HepG2 (cell line): ENCODE measurements at regions of chr4 and their contacts with region 1.

Region 1: DNA sequence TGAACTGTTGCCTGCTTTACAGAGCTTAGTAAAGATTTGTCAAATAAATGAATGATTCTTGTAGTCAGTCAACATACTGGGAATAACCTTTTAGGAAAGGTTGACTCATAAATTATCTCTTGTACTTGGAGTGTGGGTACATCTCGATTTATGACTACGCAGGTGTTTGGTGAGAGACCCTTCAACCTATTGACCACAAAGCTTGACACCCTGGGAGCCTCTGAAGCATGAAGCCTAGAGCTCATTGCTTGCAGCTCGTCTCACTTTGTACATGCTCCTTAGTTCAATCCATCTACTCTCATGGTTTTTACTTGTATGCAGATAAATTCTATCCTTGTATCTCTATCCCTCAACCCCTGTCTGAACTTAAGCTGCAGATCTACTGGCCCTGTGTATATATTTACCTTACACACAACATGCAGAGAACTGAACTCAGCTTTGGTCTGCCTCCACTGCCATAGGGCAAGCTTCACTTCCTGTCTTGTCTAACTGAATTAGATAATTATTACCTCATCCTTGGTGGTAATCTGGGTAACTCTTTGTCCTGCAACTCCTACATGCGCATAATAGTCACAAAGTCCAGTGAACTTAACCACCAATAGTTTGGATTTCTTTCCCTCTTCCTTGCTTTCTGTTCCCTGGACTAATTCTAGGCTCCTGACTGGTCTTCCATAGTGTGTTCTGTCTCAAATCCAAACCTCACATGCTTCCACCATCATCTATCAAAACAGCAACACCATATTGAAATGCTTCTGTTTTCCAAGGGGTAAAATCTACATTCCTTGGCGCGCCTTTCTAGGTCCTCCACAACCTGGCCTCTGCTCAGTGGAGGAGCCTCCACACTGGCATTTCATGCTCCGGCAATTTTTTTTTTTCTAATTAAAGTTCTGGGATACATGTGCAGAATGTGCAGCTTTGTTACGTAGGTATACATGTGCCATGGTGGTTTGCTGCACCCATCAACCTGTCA is 32.2 kb upstream of the FAT1 start:
- DNase-seq: peak; percentile 97
- ATAC-seq: peak; percentile 99
- H3K4me3 ChIP-seq: peak overlapping the region in 1 of 3 experiments; percentile 39; a peak in 1 of 6 replicates
- H3K27ac ChIP-seq: peak overlapping the region; percentile 89
- H3K4me1 ChIP-seq: peaks cover 58% of the 10 kb centered on the region
- H3K27me3 ChIP-seq: no peaks in the 10 kb centered on the region
- CTCF ChIP-seq: no peak
- EP300 ChIP-seq: peak in 1 of 2 experiments; percentile 88; a peak in 2 of 4 replicates
- POLR2A ChIP-seq: peak in 1 of 2 experiments; percentile 37; a peak in 1 of 4 replicates
- RAD21 ChIP-seq: no peak

Region 2: GRCh38 chr4:186736466-186736865 is 19.4 kb before region 1 on chr4:
- CTCF ChIA-PET with region 1: no interaction called
- POLR2A ChIA-PET with region 1: interaction called, 10 read pairs
- in situ Hi-C with region 1: no loop called
- intact Hi-C with region 1: no loop called
- DNase-seq: no peak
- ATAC-seq: no peak
- H3K4me3 ChIP-seq: no peak overlapping the region
- H3K27ac ChIP-seq: no peak overlapping the region
- H3K4me1 ChIP-seq: peaks cover 51% of the 10 kb centered on the region
- H3K27me3 ChIP-seq: no peaks in the 10 kb centered on the region
- CTCF ChIP-seq: no peak
- EP300 ChIP-seq: no peak
- POLR2A ChIP-seq: no peak
- RAD21 ChIP-seq: no peak

Region 3: GRCh38 chr4:186820391-186820891 is 64.6 kb after region 1 on chr4:
- CTCF ChIA-PET with region 1: no interaction called
- POLR2A ChIA-PET with region 1: no interaction called
- in situ Hi-C with region 1: no loop called
- intact Hi-C with region 1: no loop called
- DNase-seq: no peak
- ATAC-seq: no peak
- H3K4me3 ChIP-seq: no peak overlapping the region
- H3K27ac ChIP-seq: no peak overlapping the region
- H3K4me1 ChIP-seq: peaks cover 38% of the 10 kb centered on the region
- H3K27me3 ChIP-seq: no peaks in the 10 kb centered on the region
- CTCF ChIP-seq: no peak
- EP300 ChIP-seq: no peak
- POLR2A ChIP-seq: no peak
- RAD21 ChIP-seq: no peak